Adrenal gland (tissue), 19 donors: ENCODE measurements at regions of chr1 and their contacts with region 1.

Region 1: DNA sequence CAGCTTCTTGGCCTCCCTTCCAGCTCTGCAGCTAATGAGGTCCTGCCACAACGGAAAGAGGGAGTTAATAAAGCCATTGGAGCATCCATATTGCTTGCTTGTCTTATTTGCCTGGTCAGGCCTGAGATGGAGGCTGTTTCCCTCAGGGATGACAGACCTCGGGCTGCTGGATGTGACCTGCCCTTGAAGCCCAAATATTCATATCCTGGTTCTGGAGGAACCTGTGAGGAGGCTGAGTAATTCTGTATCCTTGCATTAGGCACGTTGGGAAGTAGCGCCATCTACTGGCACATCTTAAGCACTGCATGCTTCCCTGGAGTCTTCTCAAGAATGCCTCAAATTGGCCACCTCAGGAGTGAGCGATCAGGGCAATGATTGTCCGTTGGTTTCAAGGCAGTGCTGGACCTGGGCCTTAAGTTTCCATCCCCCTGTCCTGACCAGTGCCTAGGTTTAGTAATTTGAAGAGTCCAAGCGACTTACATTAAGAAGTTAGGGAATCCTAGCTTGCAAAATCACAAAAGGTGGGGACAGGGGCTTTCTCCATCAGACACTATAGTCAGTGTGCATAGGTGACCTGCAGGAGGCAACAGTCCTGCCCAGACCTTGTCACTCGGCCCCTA is 13.8 kb upstream of the NASP start:
- DNase-seq: peak; percentile 66 to 93 (median 81)
- H3K4me3 ChIP-seq: no peak overlapping the region
- H3K27ac ChIP-seq: peak overlapping the region in 1 of 5 donors; percentile 22
- H3K4me1 ChIP-seq: peaks cover 0 to 8% of the 10 kb centered on the region in 2 donors
- H3K27me3 ChIP-seq: no peaks in the 10 kb centered on the region
- CTCF ChIP-seq: peak; percentile 95 to 99 (median 98)
- POLR2A ChIP-seq: no peak

Region 2: DNA sequence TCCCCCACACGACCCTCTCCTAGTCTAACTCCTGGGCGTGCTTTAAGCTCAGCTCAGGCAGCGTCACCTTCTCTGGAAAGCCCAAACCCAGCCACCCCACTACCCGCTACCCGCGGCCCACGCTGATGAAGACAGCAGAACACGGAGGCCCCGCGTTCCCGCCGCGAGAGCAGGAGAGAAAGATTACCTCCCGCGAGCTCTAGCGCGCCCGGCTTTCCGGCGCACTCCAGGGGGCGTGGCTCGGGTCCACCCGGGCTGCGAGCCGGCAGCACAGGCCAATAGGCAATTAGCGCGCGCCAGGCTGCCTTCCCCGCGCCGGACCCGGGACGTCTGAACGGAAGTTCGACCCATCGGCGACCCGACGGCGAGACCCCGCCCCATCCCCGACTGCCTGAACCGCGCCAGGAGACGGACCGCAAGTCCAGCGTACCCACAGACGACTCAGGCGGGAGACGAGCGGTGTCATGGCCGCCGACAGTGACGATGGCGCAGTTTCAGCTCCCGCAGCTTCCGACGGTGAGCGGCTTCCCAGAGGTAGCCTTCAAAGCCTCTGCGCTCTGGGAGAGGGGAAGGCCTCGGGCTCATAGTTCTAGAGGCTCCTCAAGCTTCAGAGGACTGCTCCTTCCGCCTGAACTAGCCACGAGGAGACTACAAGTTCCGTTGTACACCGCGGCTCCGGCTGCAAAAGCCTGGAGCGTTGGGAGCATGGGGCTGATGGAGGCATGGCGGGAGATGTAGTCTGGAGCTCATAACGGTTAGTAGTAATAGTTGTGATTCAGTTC is 230.1 kb before region 1 on chr1 and contains the starts of genes MUTYH and TOE1:
- intact Hi-C with region 1: loop called in 1 of 2 experiments (anchors 10 kb)
- DNase-seq: peak; percentile 90 to 96 (median 92)
- H3K4me3 ChIP-seq: peak within 1 kb of the TSS; percentile 37 to 95 (median 74)
- H3K27ac ChIP-seq: peak within 1 kb of the TSS; percentile 88 to 96 (median 92)
- H3K4me1 ChIP-seq: peaks cover 19 to 20% of the 10 kb centered on the region in 2 donors
- H3K27me3 ChIP-seq: no peaks in the 10 kb centered on the region
- CTCF ChIP-seq: no peak
- POLR2A ChIP-seq: peak; percentile 76 to 78
- total RNA-seq, gene MUTYH: 15.0 to 35.4 (median 21.0) TPM
- total RNA-seq, gene TOE1: 3.3 to 15.4 (median 9.8) TPM

Region 3: GRCh38 chr1:45359882-45360513 is 210.1 kb before region 1 on chr1:
- intact Hi-C with region 1: loop called in 1 of 2 experiments (anchors 5 kb)
- DNase-seq: peak; percentile 66 to 90 (median 76)
- H3K4me3 ChIP-seq: no peak overlapping the region
- H3K27ac ChIP-seq: peak overlapping the region in 2 of 5 donors; percentile 67 to 68
- H3K4me1 ChIP-seq: peaks cover 3 to 20% of the 10 kb centered on the region in 2 donors
- H3K27me3 ChIP-seq: no peaks in the 10 kb centered on the region
- CTCF ChIP-seq: peak; percentile 69 to 91 (median 76)
- POLR2A ChIP-seq: no peak

Region 4: GRCh38 chr1:45410850-45411314 is 159.2 kb before region 1 on chr1:
- intact Hi-C with region 1: no loop called
- DNase-seq: peak in 1 of 7 donors; percentile 4
- H3K4me3 ChIP-seq: no peak overlapping the region
- H3K27ac ChIP-seq: no peak overlapping the region
- H3K4me1 ChIP-seq: no peaks in the 10 kb centered on the region
- H3K27me3 ChIP-seq: no peaks in the 10 kb centered on the region
- CTCF ChIP-seq: no peak
- POLR2A ChIP-seq: no peak

Region 5: GRCh38 chr1:45512641-45513054 is 57.4 kb before region 1 on chr1:
- intact Hi-C with region 1: loop called (anchors 5 kb)
- DNase-seq: peak; percentile 68 to 87 (median 71)
- H3K4me3 ChIP-seq: no peak overlapping the region
- H3K27ac ChIP-seq: no peak overlapping the region
- H3K4me1 ChIP-seq: peaks cover 0 to 14% of the 10 kb centered on the region in 2 donors
- H3K27me3 ChIP-seq: no peaks in the 10 kb centered on the region
- CTCF ChIP-seq: peak; percentile 45 to 69 (median 66)
- POLR2A ChIP-seq: no peak

Region 6: GRCh38 chr1:45518910-45519309 is 51.2 kb before region 1 on chr1:
- intact Hi-C with region 1: loop called (anchors 5 kb)
- DNase-seq: no peak
- H3K4me3 ChIP-seq: no peak overlapping the region
- H3K27ac ChIP-seq: no peak overlapping the region
- H3K4me1 ChIP-seq: peaks cover 5 to 13% of the 10 kb centered on the region in 2 donors
- H3K27me3 ChIP-seq: no peaks in the 10 kb centered on the region
- CTCF ChIP-seq: no peak
- POLR2A ChIP-seq: no peak

Region 7: GRCh38 chr1:45750298-45751038 is 180.4 kb after region 1 on chr1 and contains the start of gene IPP:
- intact Hi-C with region 1: no loop called
- DNase-seq: peak; percentile 97 to 98 (median 97)
- H3K4me3 ChIP-seq: peak within 1 kb of the TSS; percentile 39 to 79 (median 66)
- H3K27ac ChIP-seq: peak within 1 kb of the TSS; percentile 93 to 98 (median 94)
- H3K4me1 ChIP-seq: peaks cover 0 to 12% of the 10 kb centered on the region in 2 donors
- H3K27me3 ChIP-seq: no peaks in the 10 kb centered on the region
- CTCF ChIP-seq: peak in 3 of 6 experiments; percentile 12 to 37 (median 16)
- POLR2A ChIP-seq: peak; percentile 82 to 98
- total RNA-seq, gene IPP: 8.0 to 23.9 (median 16.6) TPM